Breast epithelium (tissue), 4 donors: ENCODE measurements at regions of chr3 and their contacts with region 1.

Region 1: DNA sequence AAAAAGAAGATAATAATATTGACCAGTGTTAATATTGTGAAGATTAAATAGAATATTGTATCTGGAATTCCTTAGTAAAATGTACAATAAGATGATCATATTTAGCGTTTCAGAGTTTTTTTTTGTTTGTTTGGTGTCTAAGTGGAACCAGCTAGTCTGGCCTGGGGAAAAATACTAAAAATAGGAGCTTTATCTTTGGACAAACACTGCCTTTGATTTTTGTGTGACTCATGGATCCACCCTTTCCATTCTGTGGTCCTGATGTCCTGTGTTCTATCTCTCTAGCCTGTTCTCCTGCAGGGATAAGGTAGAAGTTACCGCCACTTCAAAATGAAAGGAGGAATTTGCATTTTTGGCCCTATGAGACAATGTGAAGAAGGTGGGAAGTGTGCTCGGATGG is 79.7 kb upstream of the CRBN start:
- DNase-seq: no peak
- H3K4me3 ChIP-seq: no peak overlapping the region
- H3K27ac ChIP-seq: no peak overlapping the region
- H3K4me1 ChIP-seq: no peaks in the 10 kb centered on the region
- H3K27me3 ChIP-seq: no peaks in the 10 kb centered on the region
- CTCF ChIP-seq: no peak
- POLR2A ChIP-seq: no peak

Region 2: DNA sequence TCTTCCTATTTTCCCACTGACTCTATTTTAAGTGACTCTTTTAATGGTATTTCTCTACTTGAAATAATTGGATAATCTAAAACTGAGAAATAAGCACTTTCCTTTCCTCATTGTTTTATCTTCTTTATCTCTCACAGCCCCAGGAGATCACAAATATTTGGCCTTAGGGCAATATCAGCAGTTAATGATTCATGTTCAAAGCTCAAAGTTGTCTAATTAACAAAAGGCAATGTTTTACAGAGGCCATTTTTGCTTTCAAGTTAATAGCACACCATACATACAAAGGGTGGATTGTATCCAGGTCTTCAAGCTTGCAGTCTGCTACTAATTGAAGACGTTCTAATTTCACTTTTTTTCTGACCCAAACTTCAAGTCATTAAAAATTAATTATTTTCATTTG is 660.1 kb after region 1 on chr3:
- intact Hi-C with region 1: loop called (anchors 5 kb)
- DNase-seq: no peak
- H3K4me3 ChIP-seq: no peak overlapping the region
- H3K27ac ChIP-seq: no peak overlapping the region
- H3K4me1 ChIP-seq: no peaks in the 10 kb centered on the region
- H3K27me3 ChIP-seq: no peaks in the 10 kb centered on the region
- CTCF ChIP-seq: no peak
- POLR2A ChIP-seq: no peak